ENCODE measurements at regions of chr1 and their contacts with region 1.

Region 1: GRCh38 chr1:16155532-16156410 is at the start of gene EPHA2:
- DNase-seq: peak; percentile 90 to 92
- ATAC-seq: peak; percentile 64 to 79 (median 73)
- H3K4me3 ChIP-seq: peak within 1 kb of the TSS; percentile 57 to 95 (median 81)
- H3K27ac ChIP-seq: peak within 1 kb of the TSS; percentile 77 to 97 (median 94)
- H3K4me1 ChIP-seq: peaks cover 27 to 71% (median 49%) of the 10 kb centered on the region in 9 donors
- H3K27me3 ChIP-seq: peaks cover 0 to 33% (median 0%) of the 10 kb centered on the region in 7 donors
- CTCF ChIP-seq: peak in 2 of 9 donors; percentile 12 to 22
- total RNA-seq, gene EPHA2: 8.3 to 25.1 (median 11.9) TPM

Region 2: GRCh38 chr1:16175610-16176553 is 20.1 kb after region 1 on chr1:
- intact Hi-C with region 1: loop called in 2 of 10 experiments (anchors 2 kb)
- DNase-seq: peak; percentile 91 to 92
- ATAC-seq: peak; percentile 85 to 96 (median 92)
- H3K4me3 ChIP-seq: no peak overlapping the region
- H3K27ac ChIP-seq: peak overlapping the region; percentile 59 to 91 (median 84)
- H3K4me1 ChIP-seq: peaks cover 17 to 57% (median 40%) of the 10 kb centered on the region in 9 donors
- H3K27me3 ChIP-seq: no peaks in the 10 kb centered on the region
- CTCF ChIP-seq: no peak

Region 3: DNA sequence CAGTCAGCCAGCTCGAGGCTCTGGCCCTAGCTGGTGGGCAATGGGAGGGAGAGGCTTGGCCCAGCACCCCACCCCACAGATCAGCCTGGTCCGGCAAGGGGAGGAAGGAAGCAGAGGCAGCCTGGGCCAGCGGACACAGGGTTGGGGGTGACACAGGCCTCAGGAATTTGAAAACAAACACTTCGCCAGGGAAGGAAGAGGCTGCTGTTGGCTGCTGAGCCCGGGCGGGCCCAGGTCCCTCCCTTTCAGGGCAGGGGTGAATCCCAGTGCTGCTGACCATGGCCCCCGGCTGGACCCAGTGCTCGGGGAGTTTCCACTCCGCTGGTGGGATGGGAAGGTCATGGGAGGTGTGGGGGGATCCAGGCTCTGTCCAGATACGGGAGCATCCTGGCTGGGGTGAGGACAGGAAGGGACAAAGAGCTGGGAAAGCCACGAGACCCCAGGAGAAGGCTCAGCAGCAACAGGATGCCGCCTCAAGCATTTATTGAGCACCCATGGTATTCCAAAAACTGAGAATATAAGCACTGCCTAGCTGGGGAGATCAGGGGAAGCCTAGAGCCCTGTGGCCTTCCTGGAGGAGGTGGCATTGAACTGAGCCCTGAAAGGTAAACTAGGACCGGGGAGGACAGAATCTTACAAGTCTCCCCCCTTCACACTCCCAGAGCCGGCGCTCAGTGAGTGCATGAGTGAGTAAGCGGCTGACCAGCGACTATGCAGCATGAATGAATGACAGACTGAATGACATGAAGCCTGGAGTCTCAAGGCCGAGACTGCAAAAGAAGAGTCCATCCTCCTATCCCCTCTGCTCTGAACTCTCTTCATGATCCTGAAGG is 26.3 kb after region 1 on chr1:
- intact Hi-C with region 1: loop called in 3 of 10 experiments (anchors 2 to 5 kb)
- DNase-seq: peak; percentile 85 to 88
- ATAC-seq: peak; percentile 91 to 97 (median 96)
- H3K4me3 ChIP-seq: peak overlapping the region in 1 of 10 donors; percentile 5
- H3K27ac ChIP-seq: peak overlapping the region; percentile 75 to 97 (median 92)
- H3K4me1 ChIP-seq: peaks cover 12 to 36% (median 25%) of the 10 kb centered on the region in 9 donors
- H3K27me3 ChIP-seq: no peaks in the 10 kb centered on the region
- CTCF ChIP-seq: no peak

Region 4: GRCh38 chr1:16187748-16188401 is 32.1 kb after region 1 on chr1:
- intact Hi-C with region 1: loop called in 2 of 10 experiments (anchors 2 to 5 kb)
- DNase-seq: peak; percentile 69 to 83
- ATAC-seq: peak; percentile 72 to 84 (median 80)
- H3K4me3 ChIP-seq: no peak overlapping the region
- H3K27ac ChIP-seq: no peak overlapping the region
- H3K4me1 ChIP-seq: peaks cover 0 to 38% (median 10%) of the 10 kb centered on the region in 9 donors
- H3K27me3 ChIP-seq: no peaks in the 10 kb centered on the region
- CTCF ChIP-seq: peak; percentile 94 to 99 (median 97)

Measured in heart right ventricle (tissue), 16 donors.